ENCODE measurements at regions of chr6 and their contacts with region 1.

Region 1: DNA sequence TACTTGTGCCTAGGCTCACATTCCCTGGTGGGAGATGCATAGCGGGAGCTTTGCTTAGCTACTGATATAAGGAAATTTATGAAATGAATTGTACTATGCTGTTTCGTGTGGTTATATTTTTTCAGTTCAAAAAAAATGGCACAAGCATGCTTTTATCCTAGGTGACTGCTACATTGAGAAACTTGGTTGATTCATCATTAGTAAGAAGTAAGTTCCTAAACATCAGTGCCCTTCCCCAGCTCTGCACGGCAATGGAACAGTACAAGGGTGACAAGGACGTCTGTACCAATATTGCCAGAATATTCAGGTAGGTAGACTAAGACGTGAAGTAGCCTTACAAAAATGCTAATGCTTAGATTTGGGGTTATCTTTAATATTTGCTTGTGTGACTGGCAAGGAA is 79.7 kb downstream of the ARMC2 start:
- DNase-seq: no peak
- H3K4me3 ChIP-seq: no peak overlapping the region
- H3K27ac ChIP-seq: no peak overlapping the region
- H3K27me3 ChIP-seq: peaks cover 2% of the 10 kb centered on the region
- CTCF ChIP-seq: no peak

Region 2: GRCh38 chr6:108862479-108863191 is 65.3 kb before region 1 on chr6:
- CTCF ChIA-PET with region 1: interaction called, 13 read pairs
- POLR2A ChIA-PET with region 1: no interaction called
- DNase-seq: no peak
- H3K4me3 ChIP-seq: no peak overlapping the region
- H3K27ac ChIP-seq: no peak overlapping the region
- H3K27me3 ChIP-seq: no peaks in the 10 kb centered on the region
- CTCF ChIP-seq: no peak

Region 3: DNA sequence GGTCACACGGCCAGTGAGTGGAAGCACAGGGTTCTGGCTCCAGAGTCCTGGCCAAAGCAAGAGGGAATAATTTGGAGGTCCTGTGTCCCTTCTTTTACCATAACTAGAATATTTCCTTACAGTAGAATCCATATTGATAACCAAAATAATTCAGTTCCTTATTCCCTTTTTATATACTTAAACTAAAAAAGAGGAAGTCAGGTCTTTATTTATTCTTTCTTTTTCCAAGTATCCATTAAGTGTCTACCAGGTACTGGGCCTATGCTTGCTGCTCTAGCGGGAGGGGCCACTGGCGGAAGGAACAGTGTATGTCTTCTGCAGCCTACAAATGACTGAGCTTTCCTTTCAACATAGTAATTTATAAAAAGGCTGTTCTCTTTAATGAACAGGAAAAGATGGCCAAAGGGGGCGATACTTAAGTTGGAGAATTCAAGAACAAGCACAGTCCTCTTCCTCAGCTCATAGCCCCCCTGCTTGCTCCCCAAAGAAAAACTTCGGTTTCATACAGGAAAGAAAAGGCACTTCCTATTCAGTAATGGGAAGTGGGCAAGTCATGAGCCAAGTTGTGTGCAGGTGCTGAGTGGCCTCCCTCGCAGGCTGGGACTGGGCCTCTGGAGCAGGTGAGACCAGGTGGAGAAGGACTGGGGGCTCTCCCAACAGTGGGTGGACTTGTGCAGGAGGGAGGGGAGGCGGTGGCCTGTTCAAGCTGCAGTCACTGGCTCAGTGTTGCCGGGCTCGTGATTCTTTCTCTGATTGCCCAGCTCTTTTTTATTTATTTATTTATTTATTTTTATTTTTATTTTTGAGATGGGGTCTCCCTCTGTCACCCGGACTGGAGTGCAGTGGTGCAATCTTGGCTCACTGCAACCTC is 31.2 kb after region 1 on chr6:
- CTCF ChIA-PET with region 1: no interaction called
- POLR2A ChIA-PET with region 1: no interaction called
- DNase-seq: no peak
- H3K4me3 ChIP-seq: no peak overlapping the region
- H3K27ac ChIP-seq: no peak overlapping the region
- H3K27me3 ChIP-seq: no peaks in the 10 kb centered on the region
- CTCF ChIP-seq: no peak

Region 4: DNA sequence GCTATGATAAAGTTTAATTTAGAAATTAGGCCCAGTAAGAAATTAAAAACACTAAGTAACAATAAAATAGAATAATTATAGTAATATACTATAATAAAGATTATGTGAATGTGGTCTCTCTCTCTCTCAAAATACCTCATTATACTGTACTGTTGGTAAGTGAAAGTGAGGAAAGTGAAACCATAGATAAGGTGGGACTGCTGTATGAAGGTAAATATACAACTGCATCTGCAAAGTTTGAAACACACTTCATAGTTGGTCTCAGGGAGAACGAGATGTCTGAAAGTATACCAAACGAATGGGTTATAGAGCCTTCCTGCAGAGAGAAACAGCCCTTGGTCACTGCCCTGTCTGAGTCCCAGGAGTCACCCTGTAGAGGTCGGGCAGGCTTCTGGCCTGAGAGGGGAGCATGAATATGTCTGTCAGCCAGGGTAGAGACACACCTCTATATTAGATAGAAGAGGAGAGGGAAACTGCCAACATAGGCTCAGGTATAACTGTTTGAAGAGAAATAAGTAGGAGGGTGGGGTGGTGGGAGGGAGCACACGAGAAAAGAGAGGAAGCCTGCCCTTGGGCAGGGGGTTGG is 134.9 kb after region 1 on chr6:
- CTCF ChIA-PET with region 1: no interaction called
- POLR2A ChIA-PET with region 1: no interaction called
- DNase-seq: no peak
- H3K4me3 ChIP-seq: no peak overlapping the region
- H3K27ac ChIP-seq: no peak overlapping the region
- H3K27me3 ChIP-seq: no peaks in the 10 kb centered on the region
- CTCF ChIP-seq: no peak